ENCODE measurements at regions of chr15 and their contacts with region 1.

Region 1: GRCh38 chr15:59993950-59994401 is 10.1 kb upstream of the FOXB1 start:
- DNase-seq: no peak
- H3K4me3 ChIP-seq: no peak overlapping the region
- H3K27ac ChIP-seq: no peak overlapping the region
- H3K4me1 ChIP-seq: peaks cover 2% of the 10 kb centered on the region
- H3K27me3 ChIP-seq: peaks cover under 1% of the 10 kb centered on the region
- CTCF ChIP-seq: no peak
- EP300 ChIP-seq: no peak
- POLR2A ChIP-seq: no peak

Region 2: GRCh38 chr15:60448668-60449360 is 454.8 kb after region 1 on chr15:
- intact Hi-C with region 1: no loop called
- DNase-seq: no peak
- H3K4me3 ChIP-seq: no peak overlapping the region
- H3K27ac ChIP-seq: no peak overlapping the region
- H3K4me1 ChIP-seq: no peaks in the 10 kb centered on the region
- H3K27me3 ChIP-seq: no peaks in the 10 kb centered on the region
- CTCF ChIP-seq: no peak
- EP300 ChIP-seq: no peak
- POLR2A ChIP-seq: no peak

Region 3: GRCh38 chr15:60865507-60865906 is 871.5 kb after region 1 on chr15:
- intact Hi-C with region 1: loop called in 1 of 4 experiments (anchors 5 kb)
- DNase-seq: no peak
- H3K4me3 ChIP-seq: no peak overlapping the region
- H3K27ac ChIP-seq: no peak overlapping the region
- H3K4me1 ChIP-seq: no peaks in the 10 kb centered on the region
- H3K27me3 ChIP-seq: no peaks in the 10 kb centered on the region
- CTCF ChIP-seq: no peak
- EP300 ChIP-seq: no peak
- POLR2A ChIP-seq: no peak